Adrenal gland (tissue), 19 donors: ENCODE measurements at regions of chr19 and their contacts with region 1.

Region 1: GRCh38 chr19:36547001-36547732 is 19.1 kb upstream of the ZNF260 start:
- DNase-seq: no peak
- H3K4me3 ChIP-seq: peak overlapping the region in 1 of 4 donors; percentile 7
- H3K27ac ChIP-seq: no peak overlapping the region
- H3K4me1 ChIP-seq: no peaks in the 10 kb centered on the region
- H3K27me3 ChIP-seq: no peaks in the 10 kb centered on the region
- CTCF ChIP-seq: no peak
- POLR2A ChIP-seq: no peak

Region 2: DNA sequence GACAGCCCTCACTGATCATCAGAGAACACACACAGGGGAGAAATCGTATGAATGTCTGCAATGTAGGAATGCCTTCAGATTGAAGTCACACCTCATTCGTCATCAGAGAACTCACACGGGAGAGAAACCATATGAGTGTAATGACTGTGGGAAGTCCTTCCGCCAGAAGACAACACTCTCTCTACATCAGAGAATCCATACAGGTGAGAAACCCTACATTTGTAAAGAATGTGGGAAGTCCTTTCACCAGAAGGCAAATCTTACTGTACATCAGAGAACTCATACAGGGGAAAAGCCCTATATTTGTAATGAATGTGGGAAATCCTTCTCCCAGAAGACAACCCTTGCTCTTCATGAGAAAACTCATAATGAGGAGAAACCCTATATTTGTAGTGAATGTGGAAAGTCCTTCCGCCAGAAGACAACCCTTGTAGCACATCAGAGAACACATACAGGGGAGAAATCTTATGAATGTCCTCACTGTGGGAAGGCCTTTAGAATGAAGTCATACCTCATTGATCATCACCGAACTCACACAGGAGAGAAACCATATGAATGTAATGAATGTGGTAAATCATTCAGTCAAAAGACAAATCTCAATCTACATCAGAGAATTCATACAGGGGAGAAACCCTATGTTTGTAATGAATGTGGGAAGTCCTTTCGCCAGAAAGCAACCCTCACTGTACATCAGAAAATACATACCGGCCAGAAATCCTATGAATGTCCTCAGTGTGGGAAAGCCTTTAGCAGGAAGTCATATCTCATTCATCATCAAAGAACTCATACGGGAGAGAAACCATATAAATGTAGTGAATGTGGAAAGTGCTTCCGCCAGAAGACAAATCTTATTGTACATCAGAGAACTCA is 172.8 kb after region 1 on chr19:
- intact Hi-C with region 1: loop called in 1 of 2 experiments (anchors 10 kb)
- DNase-seq: no peak
- H3K4me3 ChIP-seq: no peak overlapping the region
- H3K27ac ChIP-seq: no peak overlapping the region
- H3K4me1 ChIP-seq: no peaks in the 10 kb centered on the region
- H3K27me3 ChIP-seq: no peaks in the 10 kb centered on the region
- CTCF ChIP-seq: no peak
- POLR2A ChIP-seq: no peak